Caco-2 (cell line): ENCODE measurements at regions of chr11 and their contacts with region 1.

Region 1: DNA sequence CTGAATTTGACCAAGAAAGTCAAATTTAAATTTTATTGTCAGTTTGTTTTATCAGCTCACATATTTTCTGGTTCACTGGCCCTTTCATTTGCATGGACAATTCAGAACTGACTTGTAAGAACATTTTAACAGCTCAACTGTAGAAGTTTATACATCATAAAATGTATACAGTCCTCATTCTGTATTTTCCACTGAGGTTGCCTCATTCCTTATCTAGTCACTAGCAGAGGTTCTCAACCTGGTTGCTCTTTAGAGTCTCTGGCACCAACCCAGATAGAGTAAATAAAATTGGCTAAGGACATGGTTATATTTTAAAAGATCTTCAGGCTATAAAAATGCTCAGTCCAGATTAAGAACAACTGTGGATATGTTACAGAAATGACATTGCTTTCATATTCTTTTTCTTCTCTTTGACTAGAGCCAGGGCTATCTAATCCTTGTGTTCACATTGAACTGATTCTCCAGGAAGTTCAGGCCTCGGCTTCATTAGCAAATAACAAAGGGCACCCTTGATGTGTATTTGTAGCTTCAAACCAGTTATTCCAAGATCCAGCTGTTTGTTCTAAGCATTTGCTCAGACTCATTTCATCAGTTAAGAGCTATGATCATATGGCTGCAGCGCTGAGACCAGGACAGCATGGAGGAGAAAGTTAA is 782.5 kb downstream of the ETS1 start:
- DNase-seq: peak; percentile 79 to 80
- H3K4me3 ChIP-seq: no peak overlapping the region
- H3K4me3 Mint-ChIP-seq: peak overlapping the region; percentile 59
- H3K27ac Mint-ChIP-seq: peak overlapping the region; percentile 87
- H3K4me1 ChIP-seq: peaks cover 41% of the 10 kb centered on the region
- H3K4me1 Mint-ChIP-seq: peaks cover 52% of the 10 kb centered on the region
- H3K27me3 ChIP-seq: no peaks in the 10 kb centered on the region
- H3K27me3 Mint-ChIP-seq: no peaks in the 10 kb centered on the region
- CTCF ChIP-seq: no peak

Region 2: GRCh38 chr11:127601578-127601977 is 203.3 kb before region 1 on chr11:
- CTCF ChIA-PET with region 1: no interaction called
- POLR2A ChIA-PET with region 1: no interaction called
- intact Hi-C with region 1: no loop called
- DNase-seq: no peak
- H3K4me3 ChIP-seq: no peak overlapping the region
- H3K4me3 Mint-ChIP-seq: no peak overlapping the region
- H3K27ac Mint-ChIP-seq: no peak overlapping the region
- H3K4me1 ChIP-seq: no peaks in the 10 kb centered on the region
- H3K4me1 Mint-ChIP-seq: no peaks in the 10 kb centered on the region
- H3K27me3 ChIP-seq: no peaks in the 10 kb centered on the region
- H3K27me3 Mint-ChIP-seq: peaks cover 3% of the 10 kb centered on the region
- CTCF ChIP-seq: no peak

Region 3: GRCh38 chr11:127733552-127733951 is 71.3 kb before region 1 on chr11:
- CTCF ChIA-PET with region 1: no interaction called
- POLR2A ChIA-PET with region 1: no interaction called
- intact Hi-C with region 1: loop called (anchors 5 kb)
- DNase-seq: no peak
- H3K4me3 ChIP-seq: no peak overlapping the region
- H3K4me3 Mint-ChIP-seq: no peak overlapping the region
- H3K27ac Mint-ChIP-seq: no peak overlapping the region
- H3K4me1 ChIP-seq: no peaks in the 10 kb centered on the region
- H3K4me1 Mint-ChIP-seq: peaks cover 8% of the 10 kb centered on the region
- H3K27me3 ChIP-seq: no peaks in the 10 kb centered on the region; the same call in 1 of the 2 replicates
- H3K27me3 Mint-ChIP-seq: no peaks in the 10 kb centered on the region
- CTCF ChIP-seq: no peak

Region 4: GRCh38 chr11:127825183-127825582 is 20.3 kb after region 1 on chr11:
- CTCF ChIA-PET with region 1: no interaction called
- POLR2A ChIA-PET with region 1: interaction called, 3 read pairs
- intact Hi-C with region 1: loop called (anchors 1 kb)
- DNase-seq: peak; percentile 71 to 74
- H3K4me3 ChIP-seq: no peak overlapping the region
- H3K4me3 Mint-ChIP-seq: no peak overlapping the region
- H3K27ac Mint-ChIP-seq: peak overlapping the region; percentile 53
- H3K4me1 ChIP-seq: peaks cover 10% of the 10 kb centered on the region
- H3K4me1 Mint-ChIP-seq: peaks cover 21% of the 10 kb centered on the region
- H3K27me3 ChIP-seq: no peaks in the 10 kb centered on the region
- H3K27me3 Mint-ChIP-seq: no peaks in the 10 kb centered on the region
- CTCF ChIP-seq: no peak

Region 5: GRCh38 chr11:127859941-127860354 is 55.1 kb after region 1 on chr11:
- CTCF ChIA-PET with region 1: no interaction called
- POLR2A ChIA-PET with region 1: no interaction called
- intact Hi-C with region 1: loop called (anchors 1 kb)
- DNase-seq: no peak
- H3K4me3 ChIP-seq: no peak overlapping the region
- H3K4me3 Mint-ChIP-seq: no peak overlapping the region
- H3K27ac Mint-ChIP-seq: no peak overlapping the region
- H3K4me1 ChIP-seq: peaks cover 9% of the 10 kb centered on the region; the same call in 1 of the 2 replicates
- H3K4me1 Mint-ChIP-seq: peaks cover 7% of the 10 kb centered on the region
- H3K27me3 ChIP-seq: no peaks in the 10 kb centered on the region
- H3K27me3 Mint-ChIP-seq: no peaks in the 10 kb centered on the region
- CTCF ChIP-seq: no peak